Right cardiac atrium (tissue), 5 donors: ENCODE measurements at regions of chr3 and their contacts with region 1.

Region 1: GRCh38 chr3:168511428-168512014 is 415.8 kb upstream of the GOLIM4 start:
- DNase-seq: no peak
- ATAC-seq: no peak
- H3K4me3 ChIP-seq: no peak overlapping the region
- H3K27ac ChIP-seq: no peak overlapping the region
- H3K4me1 ChIP-seq: no peaks in the 10 kb centered on the region
- H3K27me3 ChIP-seq: no peaks in the 10 kb centered on the region

Region 2: GRCh38 chr3:168615493-168616020 is 104.0 kb after region 1 on chr3:
- intact Hi-C with region 1: loop called in 2 of 4 experiments (anchors 5 to 10 kb)
- DNase-seq: no peak
- ATAC-seq: no peak
- H3K4me3 ChIP-seq: no peak overlapping the region
- H3K27ac ChIP-seq: no peak overlapping the region
- H3K4me1 ChIP-seq: no peaks in the 10 kb centered on the region
- H3K27me3 ChIP-seq: no peaks in the 10 kb centered on the region

Region 3: GRCh38 chr3:168620826-168621225 is 109.3 kb after region 1 on chr3:
- intact Hi-C with region 1: loop called in 2 of 4 experiments (anchors 5 to 10 kb)
- DNase-seq: no peak
- ATAC-seq: no peak
- H3K4me3 ChIP-seq: no peak overlapping the region
- H3K27ac ChIP-seq: no peak overlapping the region
- H3K4me1 ChIP-seq: no peaks in the 10 kb centered on the region
- H3K27me3 ChIP-seq: no peaks in the 10 kb centered on the region

Region 4: GRCh38 chr3:168847291-168847883 is 335.9 kb after region 1 on chr3:
- intact Hi-C with region 1: loop called in 2 of 4 experiments (anchors 5 to 10 kb)
- DNase-seq: no peak
- ATAC-seq: no peak
- H3K4me3 ChIP-seq: no peak overlapping the region
- H3K27ac ChIP-seq: no peak overlapping the region
- H3K4me1 ChIP-seq: no peaks in the 10 kb centered on the region
- H3K27me3 ChIP-seq: no peaks in the 10 kb centered on the region